Lower leg skin (tissue), 4 donors: ENCODE measurements at regions of chr12 and their contacts with region 1.

Region 1: DNA sequence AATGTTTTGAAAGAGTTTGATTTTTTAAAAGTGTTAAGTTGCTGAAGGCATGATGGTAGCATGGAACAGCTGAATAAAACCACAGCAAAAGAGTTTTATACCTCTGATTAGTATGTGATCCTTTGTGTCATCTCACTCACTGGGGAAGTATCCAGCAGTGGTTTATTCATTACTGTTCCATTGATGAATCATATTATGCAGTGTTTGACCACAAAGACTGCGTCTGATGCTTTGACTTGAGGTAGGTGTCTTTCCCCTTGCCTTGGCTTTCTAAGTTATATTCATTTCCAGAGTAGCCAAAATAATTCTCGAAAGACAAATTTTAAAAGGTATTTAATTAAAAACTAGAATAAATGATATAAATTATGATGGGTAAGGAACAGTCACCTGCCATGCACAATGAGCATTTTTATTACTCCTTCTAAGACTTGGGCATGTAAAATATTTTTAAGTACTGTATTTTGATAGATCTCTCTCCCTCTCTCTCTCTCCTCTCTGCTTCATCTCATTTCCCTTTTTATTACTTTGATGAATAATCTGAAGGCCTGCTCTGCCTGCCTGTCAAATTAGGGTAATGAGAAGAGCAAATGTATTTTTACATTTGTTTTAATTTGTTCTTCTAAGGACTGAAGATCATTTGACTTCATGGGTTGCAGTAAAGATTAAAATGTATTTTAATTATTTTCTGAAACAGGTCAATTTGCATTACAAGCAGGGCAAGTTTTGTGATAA is 164.9 kb downstream of the NAV3 start:
- DNase-seq: no peak
- H3K4me3 ChIP-seq: no peak overlapping the region
- CTCF ChIP-seq: no peak
- POLR2A ChIP-seq: no peak

Region 2: GRCh38 chr12:77599782-77600467 is 395.7 kb before region 1 on chr12:
- intact Hi-C with region 1: no loop called
- DNase-seq: no peak
- H3K4me3 ChIP-seq: no peak overlapping the region
- CTCF ChIP-seq: no peak
- POLR2A ChIP-seq: no peak

Region 3: GRCh38 chr12:78101946-78102635 is 106.5 kb after region 1 on chr12:
- intact Hi-C with region 1: no loop called
- DNase-seq: no peak
- H3K4me3 ChIP-seq: no peak overlapping the region
- CTCF ChIP-seq: no peak
- POLR2A ChIP-seq: no peak

Region 4: DNA sequence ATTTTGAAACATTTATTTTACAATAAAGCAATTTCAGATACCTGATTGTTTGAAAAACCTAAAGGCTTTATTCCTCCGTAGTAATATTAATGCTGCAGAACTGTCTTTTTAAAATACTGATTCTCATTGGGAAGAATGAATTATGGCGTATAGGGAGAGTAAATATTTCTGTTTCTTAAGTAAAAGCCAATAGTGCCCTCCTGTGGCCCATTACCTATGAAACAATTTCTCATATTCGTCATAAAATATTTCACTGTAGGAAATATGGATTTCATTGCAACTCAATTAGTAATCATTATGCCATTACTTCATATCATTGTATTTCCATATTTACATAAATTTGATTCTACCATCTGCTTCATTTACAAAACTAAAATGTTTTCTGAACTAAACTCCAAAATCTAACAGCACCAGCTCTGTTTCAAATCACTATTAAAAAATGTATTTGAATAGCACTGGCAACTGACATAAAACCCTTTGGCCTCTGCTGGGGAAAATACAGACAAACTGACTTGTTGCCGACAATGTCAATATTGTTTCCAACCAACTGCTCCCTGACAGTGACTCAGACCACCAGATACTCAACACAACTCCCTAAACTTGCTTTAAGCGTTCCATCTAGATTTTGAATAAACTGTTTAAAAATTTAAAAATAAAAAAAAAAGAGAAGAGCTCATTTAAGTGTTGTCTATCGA is 125.4 kb after region 1 on chr12:
- intact Hi-C with region 1: loop called (anchors 10 kb)
- DNase-seq: no peak
- H3K4me3 ChIP-seq: no peak overlapping the region
- CTCF ChIP-seq: no peak
- POLR2A ChIP-seq: no peak